ENCODE measurements at regions of chr1 and their contacts with region 1.

Region 1: DNA sequence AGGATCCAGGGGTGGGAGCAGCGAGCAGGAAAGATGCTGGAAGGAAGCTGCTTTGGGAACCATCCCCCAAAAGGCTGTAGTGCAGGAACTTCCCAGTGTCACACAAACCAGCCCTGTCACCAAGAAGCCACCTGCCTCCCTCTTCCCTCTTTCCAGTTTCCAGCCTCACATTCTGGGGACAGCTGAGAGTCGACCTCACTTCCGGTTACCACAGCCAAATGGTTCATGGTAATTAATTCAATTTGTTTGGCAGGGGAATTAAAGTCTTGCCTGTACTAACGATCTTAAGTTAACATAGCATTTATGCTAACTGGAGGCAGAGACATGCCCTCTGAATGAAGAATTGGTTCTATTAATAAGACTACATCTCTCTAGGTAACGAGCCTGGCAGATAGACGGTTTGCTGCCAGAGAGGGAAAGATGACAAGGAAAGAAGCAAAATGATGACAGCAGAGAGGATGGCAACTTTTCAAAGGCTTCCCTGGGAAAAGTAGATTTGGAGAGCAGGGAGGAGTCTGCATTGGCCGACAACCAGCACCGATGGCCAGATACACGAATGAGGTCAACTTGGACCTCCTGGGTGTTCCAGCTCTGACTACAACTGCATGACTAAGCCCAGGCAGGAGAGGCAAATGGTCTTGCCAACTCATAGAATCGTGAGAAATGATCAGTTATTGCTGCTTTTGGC is 64.1 kb downstream of the TMCO4 start:
- DNase-seq: peak; percentile 76 to 92
- H3K4me3 ChIP-seq: no peak overlapping the region
- H3K27ac ChIP-seq: peak overlapping the region; percentile 85 to 95
- H3K4me1 ChIP-seq: peaks cover 8 to 35% of the 10 kb centered on the region in 2 donors
- H3K27me3 ChIP-seq: no peaks in the 10 kb centered on the region
- CTCF ChIP-seq: no peak

Region 2: GRCh38 chr1:19448491-19449439 is 286.8 kb before region 1 on chr1:
- intact Hi-C with region 1: loop called (anchors 10 kb)
- DNase-seq: peak in 1 of 2 donors; percentile 83
- H3K4me3 ChIP-seq: peak overlapping the region; percentile 8 to 9
- H3K27ac ChIP-seq: peak overlapping the region; percentile 88 to 93
- H3K4me1 ChIP-seq: peaks cover 56 to 92% of the 10 kb centered on the region in 2 donors
- H3K27me3 ChIP-seq: no peaks in the 10 kb centered on the region
- CTCF ChIP-seq: no peak

Region 3: GRCh38 chr1:19754482-19754881 is 18.9 kb after region 1 on chr1:
- intact Hi-C with region 1: loop called (anchors 1 kb)
- DNase-seq: peak in 1 of 2 donors; percentile 85
- H3K4me3 ChIP-seq: no peak overlapping the region
- H3K27ac ChIP-seq: peak overlapping the region; percentile 80 to 82
- H3K4me1 ChIP-seq: peaks cover 6 to 18% of the 10 kb centered on the region in 2 donors
- H3K27me3 ChIP-seq: no peaks in the 10 kb centered on the region
- CTCF ChIP-seq: no peak

Region 4: GRCh38 chr1:19762175-19762779 is 26.7 kb after region 1 on chr1:
- intact Hi-C with region 1: loop called (anchors 1 kb)
- DNase-seq: no peak
- H3K4me3 ChIP-seq: no peak overlapping the region
- H3K27ac ChIP-seq: peak overlapping the region in 1 of 2 donors; percentile 10
- H3K4me1 ChIP-seq: peaks cover 6 to 9% of the 10 kb centered on the region in 2 donors
- H3K27me3 ChIP-seq: no peaks in the 10 kb centered on the region
- CTCF ChIP-seq: peak in 2 of 3 experiments; percentile 40 to 47

Region 5: GRCh38 chr1:19799877-19800804 is 64.6 kb after region 1 on chr1 and contains the start of gene TMCO4:
- intact Hi-C with region 1: loop called (anchors 2 kb)
- DNase-seq: peak in 1 of 2 donors; percentile 74
- H3K4me3 ChIP-seq: peak within 1 kb of the TSS; percentile 74 to 80
- H3K27ac ChIP-seq: peak within 1 kb of the TSS; percentile 80 to 89
- H3K4me1 ChIP-seq: peaks cover 6 to 7% of the 10 kb centered on the region in 2 donors
- H3K27me3 ChIP-seq: no peaks in the 10 kb centered on the region
- CTCF ChIP-seq: no peak
- total RNA-seq, gene TMCO4: 5.7 TPM

Region 6: DNA sequence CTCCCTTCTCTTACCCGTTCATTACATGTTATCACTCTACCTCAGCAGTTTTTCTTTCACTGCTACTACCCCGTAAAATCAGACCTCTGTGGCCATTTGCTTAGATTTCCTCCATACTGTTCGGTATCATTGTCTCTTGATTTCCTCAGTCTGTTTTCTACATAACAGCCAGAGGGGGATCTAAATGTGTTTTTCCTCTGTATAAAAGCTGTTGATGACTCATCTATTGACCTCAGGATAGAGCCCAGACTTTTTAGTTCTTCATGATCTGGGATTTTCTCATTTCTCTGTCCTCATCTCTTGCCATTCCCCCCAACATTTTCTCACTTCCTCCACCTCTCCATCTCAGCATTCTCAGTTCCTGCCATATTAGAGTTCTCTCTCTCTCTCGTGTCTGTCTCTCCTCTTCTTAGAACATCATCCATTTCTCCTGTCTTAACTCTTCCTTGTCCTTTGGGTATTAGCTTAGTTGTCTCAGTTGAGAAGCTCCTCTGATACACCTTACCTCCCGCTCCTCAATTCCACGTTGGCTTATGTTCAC is 157.1 kb after region 1 on chr1:
- intact Hi-C with region 1: no loop called
- DNase-seq: no peak
- H3K4me3 ChIP-seq: no peak overlapping the region
- H3K27ac ChIP-seq: no peak overlapping the region
- H3K4me1 ChIP-seq: no peaks in the 10 kb centered on the region
- H3K27me3 ChIP-seq: no peaks in the 10 kb centered on the region
- CTCF ChIP-seq: no peak